ENCODE measurements at regions of chr15 and their contacts with region 1.

Region 1: DNA sequence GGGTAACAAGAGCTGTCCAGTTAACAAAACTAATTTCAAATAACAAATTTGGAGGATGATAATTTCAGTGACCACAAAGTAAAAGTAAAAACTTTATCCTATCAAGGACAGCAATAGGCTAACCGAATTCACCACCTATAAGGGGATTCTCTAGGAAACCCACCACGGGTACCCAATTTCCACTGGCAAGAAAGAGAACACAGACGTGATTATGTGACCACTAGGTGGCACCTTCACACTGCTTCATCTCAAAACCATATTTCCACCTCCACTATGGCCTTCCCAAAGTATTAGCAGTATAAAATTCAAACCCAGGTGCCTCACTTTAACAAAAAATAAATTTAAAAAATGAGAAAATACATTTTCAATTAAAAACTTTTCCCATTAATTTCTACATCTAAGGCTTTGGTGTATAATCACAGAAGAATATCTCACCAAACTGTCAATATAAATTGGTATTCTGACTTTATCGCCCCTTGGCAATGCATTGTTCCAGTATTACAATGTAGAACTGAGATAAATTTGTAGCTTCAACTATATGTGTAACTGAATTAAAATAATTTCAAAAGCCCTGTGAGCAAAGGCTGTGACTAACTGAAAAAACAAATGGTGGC is 96.5 kb downstream of the FSIP1 start:
- DNase-seq: peak; percentile 40
- CTCF ChIP-seq: peak; percentile 71

Region 2: DNA sequence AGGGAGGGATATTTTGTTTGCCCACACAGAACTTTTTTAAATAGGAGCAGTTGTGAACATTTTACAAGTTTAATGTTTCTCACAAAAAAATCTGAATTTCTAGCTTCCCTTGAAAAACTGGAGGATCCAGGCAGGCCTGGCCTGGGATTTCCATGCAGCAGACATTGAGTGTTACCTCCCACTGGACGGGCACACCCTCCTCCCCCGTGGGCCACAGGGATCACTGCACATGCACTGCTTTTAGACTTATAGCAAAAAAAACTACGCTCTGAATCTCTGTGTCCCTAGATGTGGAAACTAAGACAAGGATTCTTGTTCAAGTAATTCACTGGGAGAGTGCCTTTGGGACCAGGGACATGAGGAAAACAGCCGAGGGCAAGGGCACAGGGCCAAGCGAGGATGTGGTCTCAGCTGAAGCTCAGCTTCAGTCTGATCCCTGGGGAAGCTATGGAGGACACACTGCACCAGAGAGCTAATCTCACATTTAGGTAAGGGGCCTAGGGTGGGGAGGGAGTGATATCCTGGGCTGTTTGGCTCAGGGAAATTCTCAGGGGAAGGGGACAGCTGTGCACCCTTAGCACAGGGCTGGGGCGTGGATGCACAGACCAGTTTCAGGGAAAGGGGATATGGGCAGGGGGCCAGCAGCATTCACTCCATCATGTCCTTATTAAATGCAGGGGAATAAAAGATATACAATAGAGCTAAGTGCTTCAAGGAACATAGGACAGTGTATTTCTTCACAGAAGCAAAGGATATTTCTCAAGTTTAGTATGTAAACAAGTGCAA is 50.5 kb after region 1 on chr15:
- CTCF ChIA-PET with region 1: interaction called, 10 read pairs
- POLR2A ChIA-PET with region 1: no interaction called
- DNase-seq: no peak
- CTCF ChIP-seq: no peak